Head of caudate nucleus (tissue), 42 donors: ENCODE measurements at regions of chr17 and their contacts with region 1.

Region 1: DNA sequence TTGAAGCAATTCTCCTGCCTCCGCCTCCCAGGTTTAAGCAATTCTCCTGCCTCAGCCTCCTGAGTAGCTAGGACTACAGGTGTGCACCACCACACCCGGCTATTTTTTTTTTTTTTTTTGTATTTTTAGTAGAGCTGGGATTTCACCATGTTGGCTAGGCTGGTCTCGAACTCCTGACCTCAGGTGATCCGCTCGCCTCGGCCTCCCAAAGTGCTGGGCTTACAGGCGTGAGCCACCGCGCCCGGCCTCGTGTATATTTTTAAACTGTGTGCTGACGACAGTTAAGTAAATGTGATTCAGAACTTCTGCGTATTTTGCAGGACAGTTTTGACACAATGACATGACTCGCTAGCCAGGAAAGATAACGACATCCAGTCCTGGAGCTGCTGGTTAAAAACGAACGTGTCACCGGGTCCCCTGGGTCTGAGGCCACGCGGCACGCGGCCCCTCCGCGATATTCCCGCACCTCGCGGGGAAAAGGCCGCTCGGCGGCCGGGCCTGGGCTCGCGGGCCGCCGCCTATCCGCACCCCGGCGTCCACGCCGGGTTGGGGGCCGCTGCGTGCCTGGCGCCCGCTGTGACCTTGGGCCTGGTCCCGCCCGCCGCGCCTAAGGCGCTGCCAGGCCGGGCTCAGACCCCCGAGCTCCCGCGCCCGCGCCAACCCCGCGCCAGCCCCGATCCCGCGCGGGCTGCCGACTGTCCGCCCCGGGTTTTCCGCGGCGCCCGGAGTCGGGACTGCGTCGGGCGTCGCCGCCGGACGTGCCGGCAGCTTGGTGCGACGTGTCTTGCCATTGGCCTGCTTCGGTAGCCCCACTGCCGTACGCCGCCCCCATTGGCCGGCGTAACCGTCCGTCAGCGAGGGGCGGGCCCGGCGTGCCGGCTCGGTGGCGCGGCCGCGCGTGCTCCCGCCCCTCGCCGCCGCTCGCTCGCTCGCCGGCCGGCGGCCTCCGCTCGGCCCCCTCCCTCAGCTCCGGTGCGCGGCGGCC is at the start of gene FOXK2:
- DNase-seq: peak; percentile 75 to 97 (median 94)

Region 2: GRCh38 chr17:82457997-82458864 is 60.9 kb before region 1 on chr17 and contains the start of gene NARF:
- intact Hi-C with region 1: loop called (anchors 10 kb)
- DNase-seq: peak; percentile 96 to 100 (median 99)